ENCODE measurements at regions of chr16 and their contacts with region 1.

Region 1: DNA sequence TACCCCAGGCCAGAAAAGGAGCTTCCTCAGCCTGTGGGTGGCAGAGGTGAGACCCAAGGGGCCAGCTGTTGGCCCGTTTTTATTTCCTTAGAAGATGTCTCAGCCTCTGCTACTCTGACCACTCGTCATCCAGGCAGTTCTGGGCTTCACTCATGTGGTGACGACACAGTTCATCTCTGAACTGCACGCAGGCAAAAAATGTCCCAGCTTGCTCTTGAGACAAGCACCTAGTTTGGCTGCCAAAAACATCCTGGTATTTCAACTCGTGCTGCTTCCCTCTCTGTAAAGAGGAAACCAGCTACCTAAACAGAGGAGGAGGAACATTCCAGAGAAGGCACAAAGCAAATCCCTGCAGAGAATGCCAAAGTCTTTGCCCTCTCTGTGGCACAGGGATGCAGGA is 125.7 kb downstream of the XYLT1 start:
- DNase-seq: peak; percentile 96
- H3K4me3 ChIP-seq: no peak overlapping the region
- H3K27ac ChIP-seq: peak overlapping the region; percentile 88 to 93 (median 91)
- H3K4me1 ChIP-seq: peaks cover 45 to 89% (median 83%) of the 10 kb centered on the region in 4 donors
- H3K27me3 ChIP-seq: no peaks in the 10 kb centered on the region
- CTCF ChIP-seq: no peak
- EP300 ChIP-seq: peak; percentile 86
- POLR2A ChIP-seq: no peak

Region 2: DNA sequence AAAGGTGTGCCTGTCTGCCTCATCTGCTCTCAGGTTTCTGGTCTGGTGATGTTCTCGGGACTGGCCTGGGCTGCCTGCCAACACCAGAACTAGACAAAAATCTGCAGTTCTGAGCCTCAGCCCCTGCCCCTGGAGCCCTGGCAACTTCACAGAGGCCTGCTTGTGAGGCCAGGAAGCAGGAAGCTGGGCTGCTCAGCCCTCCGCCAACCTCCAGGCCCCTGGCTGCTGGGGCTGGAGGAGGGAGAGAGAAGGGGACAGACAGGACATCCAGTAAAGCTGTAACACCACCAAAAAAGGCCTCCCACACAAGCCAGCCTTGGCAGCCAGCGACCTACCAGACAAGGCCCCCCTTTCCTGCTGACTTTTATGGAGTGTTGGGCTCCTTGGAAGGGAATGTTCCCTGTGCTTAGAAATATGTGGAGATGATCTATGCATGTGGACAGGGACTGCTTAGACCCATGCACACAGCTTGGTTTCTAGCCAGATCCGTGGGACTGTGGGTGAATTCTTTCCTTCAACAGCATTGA is 31.9 kb before region 1 on chr16:
- intact Hi-C with region 1: loop called (anchors 5 kb)
- DNase-seq: no peak
- H3K4me3 ChIP-seq: no peak overlapping the region
- H3K27ac ChIP-seq: peak overlapping the region; percentile 91 to 95 (median 93)
- H3K4me1 ChIP-seq: peaks cover 14 to 79% (median 72%) of the 10 kb centered on the region in 4 donors
- H3K27me3 ChIP-seq: no peaks in the 10 kb centered on the region
- CTCF ChIP-seq: no peak
- EP300 ChIP-seq: peak; percentile 94
- POLR2A ChIP-seq: peak; percentile 13

Region 3: DNA sequence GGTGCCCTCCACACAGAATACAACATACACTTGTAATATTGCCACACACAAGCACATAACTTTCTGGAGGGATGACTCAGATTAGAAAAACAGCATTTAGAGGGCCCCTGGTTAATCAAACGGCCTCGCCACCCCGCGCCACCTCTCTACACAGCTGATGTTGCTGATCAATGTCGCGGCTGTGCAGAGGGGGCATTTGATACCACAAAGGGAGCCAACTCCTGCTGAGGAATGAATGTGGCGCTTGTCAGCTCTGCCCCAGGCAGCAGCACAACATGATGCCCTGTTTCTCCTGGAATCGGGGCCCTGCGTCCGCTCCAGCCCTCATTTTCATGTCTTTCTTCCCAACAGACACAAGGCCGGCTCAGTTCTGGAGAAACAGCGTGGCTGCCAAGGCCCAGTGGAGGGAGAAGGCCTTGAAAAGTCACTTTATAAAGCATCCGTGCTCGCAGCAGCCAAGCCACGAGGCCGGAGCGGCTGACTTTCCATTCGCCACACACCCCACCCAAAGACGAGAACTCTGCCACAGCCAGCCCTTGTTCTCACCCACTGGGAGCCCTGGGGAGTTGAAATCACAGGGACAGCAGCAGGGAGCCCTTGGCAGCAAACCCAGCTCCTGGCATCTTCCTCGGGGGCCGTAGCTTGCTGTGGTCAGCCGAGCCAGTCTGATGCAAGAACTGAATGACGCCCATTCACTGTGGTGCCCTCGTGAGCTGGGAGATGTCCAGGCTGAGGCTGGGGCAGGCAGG is 60.1 kb after region 1 on chr16:
- intact Hi-C with region 1: loop called (anchors 5 kb)
- DNase-seq: peak; percentile 94
- H3K4me3 ChIP-seq: peak overlapping the region; percentile 2 to 20 (median 10)
- H3K27ac ChIP-seq: peak overlapping the region; percentile 89 to 95 (median 94)
- H3K4me1 ChIP-seq: peaks cover 15 to 83% (median 70%) of the 10 kb centered on the region in 4 donors
- H3K27me3 ChIP-seq: no peaks in the 10 kb centered on the region
- CTCF ChIP-seq: no peak
- EP300 ChIP-seq: peak; percentile 84
- POLR2A ChIP-seq: no peak